ENCODE measurements at regions of chrX and their contacts with region 1.

Region 1: GRCh38 chrX:73855546-73855945 is 292.5 kb downstream of the CHIC1 start:
- DNase-seq: peak; percentile 69
- H3K4me3 Mint-ChIP-seq: no peak overlapping the region
- H3K27ac Mint-ChIP-seq: no peak overlapping the region
- H3K4me1 Mint-ChIP-seq: no peaks in the 10 kb centered on the region
- H3K27me3 Mint-ChIP-seq: no peaks in the 10 kb centered on the region

Region 2: DNA sequence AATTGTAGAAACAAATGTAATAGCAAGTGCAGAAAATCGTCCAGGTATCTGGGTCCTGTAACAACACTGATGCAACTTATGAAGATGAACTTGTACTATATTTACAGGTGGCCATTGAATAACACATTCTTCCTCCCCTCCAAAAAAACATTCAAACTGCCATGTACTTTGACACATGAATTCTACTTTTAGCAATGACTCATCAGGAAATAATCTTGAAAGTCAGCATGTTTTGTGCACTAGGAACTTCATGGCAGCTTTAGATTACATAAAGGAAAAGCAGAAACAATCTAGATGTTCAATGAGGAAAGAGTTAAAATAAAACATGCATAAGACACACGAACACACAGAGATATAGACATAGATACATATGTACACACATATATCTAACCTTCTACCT is 778.7 kb before region 1 on chrX:
- CTCF ChIA-PET with region 1: no interaction called
- intact Hi-C with region 1: loop called (anchors 10 kb)
- DNase-seq: no peak
- H3K4me3 Mint-ChIP-seq: no peak overlapping the region
- H3K27ac Mint-ChIP-seq: no peak overlapping the region
- H3K4me1 Mint-ChIP-seq: no peaks in the 10 kb centered on the region
- H3K27me3 Mint-ChIP-seq: peaks cover 7% of the 10 kb centered on the region

Region 3: GRCh38 chrX:74015379-74016019 is 160.0 kb after region 1 on chrX:
- CTCF ChIA-PET with region 1: interaction called, 7 read pairs
- intact Hi-C with region 1: loop called (anchors 1 kb)
- DNase-seq: peak; percentile 72
- H3K4me3 Mint-ChIP-seq: no peak overlapping the region
- H3K27ac Mint-ChIP-seq: no peak overlapping the region
- H3K4me1 Mint-ChIP-seq: no peaks in the 10 kb centered on the region
- H3K27me3 Mint-ChIP-seq: no peaks in the 10 kb centered on the region

Region 4: GRCh38 chrX:74133156-74133796 is 277.7 kb after region 1 on chrX:
- CTCF ChIA-PET with region 1: interaction called, 8 read pairs
- intact Hi-C with region 1: loop called (anchors 1 kb)
- DNase-seq: peak; percentile 5
- H3K4me3 Mint-ChIP-seq: no peak overlapping the region
- H3K27ac Mint-ChIP-seq: no peak overlapping the region
- H3K4me1 Mint-ChIP-seq: no peaks in the 10 kb centered on the region
- H3K27me3 Mint-ChIP-seq: no peaks in the 10 kb centered on the region

Region 5: DNA sequence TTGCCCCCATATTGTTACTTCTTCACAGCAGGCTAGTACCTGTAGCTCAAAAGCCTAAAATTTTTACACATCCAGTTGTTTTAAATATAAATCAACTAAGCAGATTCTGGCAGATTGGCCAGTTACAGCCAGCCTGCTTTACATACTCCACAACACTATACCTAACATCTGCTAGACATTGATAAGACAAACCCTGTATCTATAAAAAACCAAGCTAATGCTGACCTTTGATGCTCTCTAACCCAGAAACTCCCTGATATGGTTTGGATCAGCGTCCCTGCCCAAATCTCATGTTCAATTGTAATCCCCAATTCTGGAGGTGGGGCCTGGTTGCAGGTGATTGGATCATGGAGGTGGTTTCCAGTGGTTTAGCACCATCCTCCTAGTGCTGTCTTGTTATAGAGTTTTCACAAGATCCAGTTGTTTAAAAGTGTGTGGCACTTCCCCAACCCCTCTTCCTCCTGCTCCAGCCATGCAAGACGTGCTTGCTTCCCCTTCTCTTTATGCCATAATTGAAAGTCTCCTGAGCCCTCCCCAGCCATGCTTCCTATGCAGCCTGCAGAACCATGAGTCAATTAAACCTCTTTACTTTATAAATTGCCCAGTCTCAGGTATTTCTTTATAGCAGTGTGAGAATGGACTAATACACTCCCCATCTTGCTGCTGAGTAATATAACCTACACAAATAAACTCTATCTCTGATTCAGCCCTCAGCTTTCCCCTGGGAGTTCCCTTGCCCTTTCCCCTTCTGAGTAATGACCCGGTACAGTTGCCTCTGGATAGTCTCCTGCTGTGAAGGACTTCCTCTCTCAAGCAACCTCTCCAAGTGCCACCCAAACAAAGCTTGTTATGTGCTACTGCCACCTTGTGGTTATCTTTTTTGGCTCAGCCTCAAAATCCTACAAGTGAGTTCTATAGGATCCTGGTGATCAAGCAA is 488.1 kb after region 1 on chrX:
- CTCF ChIA-PET with region 1: interaction called, 5 read pairs
- intact Hi-C with region 1: loop called (anchors 1 kb)
- DNase-seq: peak; percentile 53
- H3K4me3 Mint-ChIP-seq: no peak overlapping the region
- H3K27ac Mint-ChIP-seq: no peak overlapping the region
- H3K4me1 Mint-ChIP-seq: peaks cover 4% of the 10 kb centered on the region
- H3K27me3 Mint-ChIP-seq: no peaks in the 10 kb centered on the region

Region 6: DNA sequence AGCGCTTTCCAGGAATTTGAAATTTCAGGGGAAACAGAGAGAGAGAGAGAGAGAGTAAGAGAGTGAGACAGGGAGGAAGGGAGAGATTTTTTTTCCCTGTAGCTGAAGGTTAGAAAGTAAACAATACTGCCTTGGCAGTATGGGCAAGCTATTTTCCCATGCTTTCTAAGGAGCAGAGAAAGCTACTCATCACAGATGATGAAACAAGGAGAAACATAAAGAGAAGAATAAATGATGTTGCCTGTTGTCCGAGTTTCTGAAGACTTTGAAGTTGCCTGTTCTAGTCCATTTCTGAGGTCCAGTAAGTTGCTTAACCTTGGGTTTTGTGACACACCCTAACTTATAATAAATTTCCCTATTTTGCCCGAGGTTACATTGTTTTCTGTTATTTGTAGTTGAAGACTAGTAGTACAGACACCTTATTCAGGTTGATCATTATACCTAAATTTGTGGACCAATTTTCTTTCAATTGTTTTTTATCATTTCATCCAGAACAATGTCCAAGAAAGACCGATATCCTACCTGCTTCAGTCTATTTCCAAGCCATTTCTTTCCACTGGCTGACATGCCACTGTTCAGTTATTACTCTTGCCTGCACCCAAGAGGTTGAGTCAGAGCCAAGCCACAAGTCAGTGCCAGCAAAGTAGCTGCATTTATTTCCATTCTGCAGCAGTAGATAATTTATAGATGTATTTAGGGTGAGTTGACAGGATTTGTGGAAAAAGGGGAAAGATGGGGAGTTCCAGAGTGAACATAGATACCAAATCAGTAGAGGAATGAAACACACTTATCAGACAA is 516.1 kb after region 1 on chrX:
- CTCF ChIA-PET with region 1: no interaction called
- intact Hi-C with region 1: no loop called
- DNase-seq: no peak
- H3K4me3 Mint-ChIP-seq: no peak overlapping the region
- H3K27ac Mint-ChIP-seq: no peak overlapping the region
- H3K4me1 Mint-ChIP-seq: no peaks in the 10 kb centered on the region
- H3K27me3 Mint-ChIP-seq: no peaks in the 10 kb centered on the region

Measured in activated naive CD4-positive, alpha-beta T cell treated with anti-CD3 and anti-CD28 coated beads for 36 hours (primary cell).